ENCODE measurements at regions of chr4 and their contacts with region 1.

Region 1: GRCh38 chr4:38861791-38862190 is 5.2 kb upstream of the TLR6 start:
- DNase-seq: no peak
- ATAC-seq: no peak
- H3K4me3 ChIP-seq: no peak overlapping the region
- H3K27ac ChIP-seq: no peak overlapping the region
- H3K4me1 ChIP-seq: peaks cover 0 to 21% (median 0%) of the 10 kb centered on the region in 9 donors
- H3K27me3 ChIP-seq: no peaks in the 10 kb centered on the region
- CTCF ChIP-seq: no peak

Region 2: DNA sequence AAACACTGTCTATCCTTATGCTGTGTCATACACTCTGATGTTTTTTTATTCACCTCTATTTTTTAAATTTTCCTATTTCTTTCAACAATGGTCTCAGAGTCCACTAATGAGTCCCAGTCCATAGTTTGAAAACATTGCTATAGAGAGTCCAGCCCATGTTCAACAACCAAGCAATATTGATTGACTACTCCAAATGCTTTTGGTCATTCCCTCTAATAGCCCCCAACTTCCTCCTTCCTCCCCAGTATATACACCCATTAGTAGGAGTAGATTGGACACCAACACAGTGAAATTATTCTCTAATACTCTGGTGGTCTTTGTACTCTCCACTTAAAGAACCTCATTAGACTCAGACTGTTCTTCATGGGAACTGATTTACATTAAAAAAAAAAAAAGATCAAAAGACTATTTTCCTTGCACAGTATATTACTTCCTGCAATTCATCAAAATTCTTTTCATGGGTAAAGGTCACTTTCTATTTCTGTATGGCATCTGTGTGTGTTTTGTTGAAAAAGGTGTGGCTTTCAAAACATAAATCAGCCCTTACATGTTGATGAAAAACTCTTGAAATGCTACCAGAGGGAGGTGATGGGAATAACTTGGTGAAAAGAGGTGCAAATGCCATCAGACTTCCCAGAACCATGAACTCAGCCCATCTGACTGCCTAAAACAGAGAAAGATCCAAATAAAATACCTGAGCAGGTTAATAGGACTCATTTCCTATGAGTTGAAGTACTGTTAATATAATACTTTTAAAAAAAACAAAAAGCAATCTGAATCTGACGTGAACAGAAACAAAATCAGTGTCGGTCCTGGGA is 448.1 kb before region 1 on chr4:
- intact Hi-C with region 1: no loop called
- DNase-seq: no peak
- ATAC-seq: no peak
- H3K4me3 ChIP-seq: no peak overlapping the region
- H3K27ac ChIP-seq: no peak overlapping the region
- H3K4me1 ChIP-seq: peaks cover 0 to 18% (median 0%) of the 10 kb centered on the region in 9 donors
- H3K27me3 ChIP-seq: no peaks in the 10 kb centered on the region
- CTCF ChIP-seq: no peak

Region 3: DNA sequence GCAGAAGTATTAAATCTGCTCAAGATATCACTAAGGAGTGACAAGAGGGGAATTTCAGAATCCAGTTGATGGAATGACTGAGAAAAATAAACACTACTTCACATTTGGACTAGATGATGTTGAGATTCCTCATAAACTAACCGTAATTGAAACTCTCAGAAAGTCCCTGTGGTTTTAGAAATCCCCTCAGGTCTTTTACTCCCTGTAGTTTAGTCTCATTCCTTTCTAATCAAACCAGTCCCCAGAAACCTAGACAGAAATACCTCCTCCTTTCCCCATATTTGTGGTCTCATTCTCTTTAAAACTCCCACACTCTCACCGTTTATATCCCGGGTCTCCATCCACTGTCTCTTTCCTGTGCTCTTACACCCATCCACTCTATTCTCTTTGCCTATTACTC is 42.2 kb before region 1 on chr4:
- intact Hi-C with region 1: loop called in 1 of 10 experiments (anchors 1 kb)
- DNase-seq: no peak
- ATAC-seq: no peak
- H3K4me3 ChIP-seq: no peak overlapping the region
- H3K27ac ChIP-seq: no peak overlapping the region
- H3K4me1 ChIP-seq: peaks cover 0 to 48% (median 0%) of the 10 kb centered on the region in 9 donors
- H3K27me3 ChIP-seq: peaks cover 0 to 1% (median 0%) of the 10 kb centered on the region in 7 donors
- CTCF ChIP-seq: no peak

Measured in heart right ventricle (tissue), 16 donors.